ENCODE measurements at regions of chr5 and their contacts with region 1.

Region 1: GRCh38 chr5:68587171-68587570 is 371.6 kb downstream of the PIK3R1 start:
- DNase-seq: no peak
- ATAC-seq: no peak
- H3K4me3 Mint-ChIP-seq: no peak overlapping the region
- H3K27ac Mint-ChIP-seq: no peak overlapping the region
- H3K4me1 Mint-ChIP-seq: no peaks in the 10 kb centered on the region
- H3K27me3 Mint-ChIP-seq: no peaks in the 10 kb centered on the region

Region 2: GRCh38 chr5:68576805-68577204 is 10.4 kb before region 1 on chr5:
- CTCF ChIA-PET with region 1: no interaction called
- POLR2A ChIA-PET with region 1: no interaction called
- intact Hi-C with region 1: loop called in 1 of 2 experiments (anchors 1 kb)
- DNase-seq: no peak
- ATAC-seq: no peak
- H3K4me3 Mint-ChIP-seq: no peak overlapping the region
- H3K27ac Mint-ChIP-seq: no peak overlapping the region
- H3K4me1 Mint-ChIP-seq: no peaks in the 10 kb centered on the region
- H3K27me3 Mint-ChIP-seq: peaks cover 4% of the 10 kb centered on the region

Region 3: DNA sequence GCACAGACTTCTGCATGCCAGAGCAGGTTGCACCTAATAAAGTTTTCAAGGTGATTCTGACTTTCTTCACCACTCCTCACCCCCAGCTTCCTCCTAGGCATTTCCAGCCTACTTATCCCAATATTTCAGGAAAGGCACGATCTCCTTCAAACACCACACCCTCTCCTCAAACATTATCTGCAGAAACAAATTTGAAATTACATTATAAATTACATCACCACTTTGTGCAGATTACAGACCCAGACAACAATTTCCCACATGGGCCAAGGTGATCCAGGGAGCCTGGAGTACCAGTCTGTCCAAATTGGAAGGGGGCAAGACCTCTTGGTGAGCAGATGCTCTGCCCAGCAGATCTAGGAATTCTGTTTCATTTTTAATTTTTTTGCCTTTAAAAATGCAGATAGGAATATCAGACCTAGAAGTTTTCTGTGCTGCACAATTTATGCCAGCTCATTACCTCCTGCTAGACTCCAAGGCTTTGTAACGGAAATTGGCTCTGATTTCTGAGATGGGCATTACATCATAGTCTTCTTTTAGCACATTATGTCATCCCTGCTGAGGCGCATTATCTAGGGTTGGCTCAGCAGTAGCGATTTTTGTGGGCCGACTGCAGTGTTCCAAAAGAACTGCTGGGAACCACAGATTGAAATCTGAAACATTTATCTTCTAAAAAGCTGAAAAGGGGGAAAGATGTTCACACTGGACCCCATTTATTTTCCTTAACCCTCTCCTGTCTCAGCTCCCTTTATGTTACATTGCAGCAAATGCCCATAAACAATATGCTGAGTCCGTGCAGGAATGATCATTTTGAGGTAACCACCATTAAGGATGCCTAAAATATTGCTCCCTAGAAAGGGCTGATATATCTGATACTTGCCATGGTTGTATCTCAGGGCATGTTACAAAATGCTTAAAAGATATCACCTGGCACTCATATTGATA is 143.5 kb after region 1 on chr5:
- CTCF ChIA-PET with region 1: no interaction called
- POLR2A ChIA-PET with region 1: no interaction called
- intact Hi-C with region 1: no loop called
- DNase-seq: no peak
- ATAC-seq: no peak
- H3K4me3 Mint-ChIP-seq: no peak overlapping the region
- H3K27ac Mint-ChIP-seq: no peak overlapping the region
- H3K4me1 Mint-ChIP-seq: peaks cover 9% of the 10 kb centered on the region
- H3K27me3 Mint-ChIP-seq: no peaks in the 10 kb centered on the region